Left ventricle myocardium superior (tissue), 1 donor: ENCODE measurements at regions of chr7 and their contacts with region 1.

Region 1: DNA sequence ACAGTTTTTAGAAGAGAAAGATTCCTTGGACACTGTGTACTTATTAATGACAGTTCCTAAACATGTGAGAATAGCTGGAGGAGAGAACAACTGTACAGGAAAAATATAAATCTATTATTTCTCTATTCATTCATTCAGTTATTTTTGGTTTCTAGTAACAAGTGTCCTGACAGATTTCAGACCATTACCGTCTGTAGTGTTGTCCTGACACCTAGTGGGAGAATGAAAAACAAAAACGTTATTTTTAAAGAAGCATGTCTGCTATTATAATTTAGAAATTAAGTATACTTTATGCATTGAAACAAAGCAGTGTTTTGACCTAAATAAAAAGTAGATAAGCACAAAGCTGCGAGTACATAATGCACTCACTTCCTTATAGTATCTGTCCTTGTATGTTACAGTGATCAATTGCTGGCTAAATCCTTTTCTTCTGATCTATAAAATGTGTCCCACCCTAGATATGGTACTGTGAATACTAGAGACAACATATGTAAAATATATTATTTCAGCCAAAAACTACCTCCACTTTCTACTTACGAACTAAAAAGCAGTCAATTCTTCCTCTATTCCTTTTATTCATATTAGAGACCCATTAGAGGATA is 575.6 kb downstream of the ARL4A start:
- DNase-seq: no peak
- ATAC-seq: peak; percentile 61

Region 2: DNA sequence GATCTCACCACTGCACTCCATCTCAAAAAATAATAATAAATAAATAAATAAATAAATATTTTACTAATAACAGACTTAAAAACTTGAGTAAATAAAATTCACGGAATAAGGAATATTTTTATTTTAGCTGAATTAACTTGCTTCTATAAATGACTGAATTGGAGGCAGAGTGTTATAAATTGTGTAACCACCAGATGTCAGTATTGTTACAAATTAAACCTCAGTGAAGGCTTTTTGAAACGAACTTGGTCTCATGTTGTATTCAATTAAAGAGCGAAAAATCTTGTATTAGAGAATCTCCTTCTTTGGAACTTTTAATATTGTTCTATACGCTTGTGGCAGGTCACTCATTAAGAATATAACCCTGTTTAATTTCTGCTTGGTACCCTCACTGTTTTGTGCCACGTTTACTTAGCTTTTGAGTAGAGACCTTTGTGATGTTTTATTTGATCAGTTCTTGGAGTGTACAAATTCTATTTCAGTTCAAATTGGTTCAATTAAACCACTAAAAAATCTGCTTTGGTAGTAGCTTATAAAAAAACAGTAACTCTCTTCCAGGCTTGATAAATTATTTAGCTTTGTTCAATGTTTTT is 738.1 kb before region 1 on chr7:
- intact Hi-C with region 1: loop called (anchors 5 kb)
- DNase-seq: no peak
- ATAC-seq: no peak

Region 3: GRCh38 chr7:12638851-12639467 is 624.1 kb before region 1 on chr7:
- intact Hi-C with region 1: loop called (anchors 5 kb)
- DNase-seq: no peak
- ATAC-seq: peak; percentile 43

Region 4: DNA sequence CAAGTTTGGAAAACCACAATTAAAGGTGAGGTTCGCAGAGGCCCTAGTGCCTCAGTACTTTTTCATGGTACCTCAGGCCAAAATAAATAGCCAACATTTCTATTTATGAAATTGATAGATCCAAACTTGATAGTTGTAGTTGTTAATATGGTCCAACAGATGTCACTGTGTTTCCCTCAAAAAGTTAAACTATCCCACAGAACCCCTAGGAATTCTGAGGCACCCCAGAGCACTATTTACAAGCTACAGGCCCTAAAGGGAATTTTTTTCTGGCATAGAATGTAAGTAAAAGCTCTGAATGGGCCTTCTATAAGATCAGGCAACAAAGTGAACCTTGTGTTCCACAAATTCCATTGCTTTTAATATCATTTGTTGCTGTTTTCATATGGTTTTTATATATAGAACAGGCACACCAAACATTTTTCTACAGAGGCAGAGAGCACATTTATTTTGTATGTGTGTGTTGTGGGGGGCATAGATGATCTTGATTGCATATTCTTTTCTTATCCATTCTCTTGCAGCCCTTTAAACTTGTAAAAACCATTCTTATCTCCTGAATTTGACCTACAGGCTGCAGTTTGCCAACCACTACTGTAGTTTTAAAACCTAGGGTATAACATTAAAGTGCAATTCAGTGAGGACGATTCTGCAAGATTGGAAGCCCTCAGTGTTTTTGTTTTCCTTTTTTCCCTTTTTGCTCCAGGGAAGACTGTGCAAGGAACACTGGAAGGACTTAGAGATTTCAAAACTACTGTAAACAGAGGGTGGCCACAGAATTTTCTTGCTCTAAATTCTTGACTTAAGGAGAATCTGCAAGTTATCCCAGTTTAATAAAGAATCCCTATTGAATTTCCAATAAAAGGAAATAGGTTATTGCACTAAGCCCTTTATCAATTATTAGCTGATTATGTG is 579.1 kb before region 1 on chr7:
- intact Hi-C with region 1: loop called (anchors 5 kb)
- DNase-seq: no peak
- ATAC-seq: no peak

Region 5: DNA sequence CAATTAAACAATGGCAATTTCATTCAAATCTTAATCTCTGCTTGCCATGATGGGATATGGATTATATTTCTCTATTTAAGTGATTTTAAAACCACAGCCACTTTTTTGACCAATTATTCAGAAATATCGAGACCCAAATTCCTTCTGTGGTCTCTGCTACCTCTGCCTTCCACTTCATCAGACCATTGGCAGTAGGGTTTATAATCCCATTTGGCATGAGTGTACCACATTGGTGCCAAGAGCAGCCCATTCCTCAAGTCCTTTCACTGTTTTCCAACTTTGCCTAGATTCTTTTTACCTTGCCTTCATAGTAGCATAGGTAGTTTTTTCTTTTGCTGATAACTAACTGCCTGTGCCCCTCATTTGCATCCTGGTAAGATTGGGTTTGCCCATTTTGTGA is 255.7 kb before region 1 on chr7:
- intact Hi-C with region 1: no loop called
- DNase-seq: no peak
- ATAC-seq: no peak

Region 6: DNA sequence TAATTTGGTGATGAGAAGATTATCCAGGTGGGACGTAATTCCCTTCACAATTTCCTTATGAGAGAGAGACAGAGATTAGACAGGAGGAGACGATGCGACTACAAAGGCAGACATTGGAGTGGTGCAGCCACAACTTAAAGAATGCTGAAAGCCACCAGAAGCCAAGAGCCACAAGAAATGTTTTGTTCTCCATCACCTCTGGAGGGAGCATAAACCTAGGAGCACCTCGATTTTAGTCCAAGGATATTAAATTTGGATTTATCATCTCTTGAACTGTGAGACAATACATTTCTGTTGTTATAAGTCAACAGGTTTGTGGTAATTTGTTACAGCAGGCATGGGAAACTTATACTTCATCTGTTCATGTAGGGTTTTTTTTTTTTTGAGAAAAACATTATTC is 1220.6 kb after region 1 on chr7:
- intact Hi-C with region 1: no loop called
- DNase-seq: no peak
- ATAC-seq: no peak